ENCODE measurements at regions of chr4 and their contacts with region 1.

Region 1: DNA sequence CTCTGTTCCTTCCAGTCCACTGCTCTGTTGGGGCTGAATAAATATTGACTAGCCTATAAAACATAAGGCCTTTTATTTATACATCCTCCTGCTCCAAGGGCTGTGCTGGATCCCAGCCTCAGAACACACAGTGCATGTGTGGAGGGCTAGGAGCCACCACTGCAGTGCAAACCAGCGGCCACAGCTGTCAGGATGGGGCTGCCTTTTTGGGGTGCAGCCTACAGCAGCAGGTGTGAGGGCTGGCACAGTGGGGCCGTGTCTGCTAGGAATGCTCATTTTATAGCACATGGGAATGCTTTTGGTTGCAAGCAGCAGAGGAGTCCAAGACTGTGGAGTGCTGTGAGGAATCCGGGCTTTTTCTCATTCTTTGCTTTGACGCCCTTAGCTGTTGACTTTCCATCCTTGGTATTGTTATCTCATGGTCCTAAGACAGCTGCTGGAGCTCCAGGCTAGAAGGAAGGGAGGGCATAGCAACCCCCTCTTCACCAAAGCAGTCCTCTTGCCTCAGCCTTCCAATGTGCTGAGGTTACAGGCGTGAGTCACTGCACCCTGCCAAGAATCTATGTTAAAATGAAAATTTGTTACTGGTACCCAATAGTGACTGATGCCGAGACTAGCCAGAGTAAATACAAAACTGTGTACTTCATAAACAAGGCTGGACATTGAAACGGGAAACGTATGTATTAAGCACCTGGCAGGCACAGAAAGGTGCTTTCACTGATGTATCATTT is 334.3 kb upstream of the GATB start:
- DNase-seq: peak in 1 of 14 experiments; percentile 50
- ATAC-seq: no peak
- H3K4me3 ChIP-seq: no peak overlapping the region
- H3K4me3 Mint-ChIP-seq: no peak overlapping the region
- H3K27ac ChIP-seq: peak overlapping the region in 1 of 2 donors; percentile 61
- H3K27ac Mint-ChIP-seq: peak overlapping the region; percentile 95
- H3K4me1 ChIP-seq: peaks cover 78% of the 10 kb centered on the region
- H3K4me1 Mint-ChIP-seq: peaks cover 69% of the 10 kb centered on the region
- H3K27me3 ChIP-seq: no peaks in the 10 kb centered on the region
- H3K27me3 Mint-ChIP-seq: no peaks in the 10 kb centered on the region
- CTCF ChIP-seq: no peak

Region 2: DNA sequence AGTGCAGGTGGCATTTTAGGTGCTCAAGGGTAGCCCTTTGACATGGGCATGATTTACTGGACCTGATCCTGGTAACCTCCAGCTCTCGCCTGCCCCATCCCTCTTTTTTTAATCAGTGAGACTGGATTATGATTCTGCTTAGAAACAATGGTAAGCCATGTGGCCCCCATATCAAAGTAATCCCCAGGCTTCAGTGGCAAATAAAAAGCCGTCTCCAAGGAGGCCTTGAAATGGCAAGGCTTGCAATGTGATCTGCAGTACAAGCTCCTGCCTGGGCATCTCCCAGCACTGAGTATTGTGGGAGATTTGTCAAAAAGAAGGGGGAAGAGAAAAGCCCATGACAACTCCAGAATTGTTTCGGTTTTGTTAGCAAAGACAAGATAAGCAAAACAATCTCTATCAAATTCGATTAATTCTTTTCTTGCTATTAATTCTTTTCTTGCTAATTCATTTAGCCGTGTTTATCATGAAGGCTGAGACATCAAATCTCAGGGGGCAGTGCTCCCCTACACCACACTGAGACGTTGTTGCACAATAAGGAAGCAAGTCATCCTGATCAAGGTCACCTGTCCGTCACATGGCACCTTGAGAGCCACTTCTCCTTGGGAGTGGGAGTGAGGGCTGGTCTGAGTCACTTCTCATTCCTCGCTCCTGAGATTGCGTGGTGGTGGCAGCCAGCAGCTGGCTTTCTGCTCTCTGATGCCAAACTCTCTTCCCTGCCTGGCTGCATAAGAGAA is 21.6 kb before region 1 on chr4:
- CTCF ChIA-PET with region 1: no interaction called
- POLR2A ChIA-PET with region 1: interaction called, 52 read pairs
- intact Hi-C with region 1: loop called in 1 of 2 experiments (anchors 2 kb)
- DNase-seq: no peak
- ATAC-seq: no peak
- H3K4me3 ChIP-seq: no peak overlapping the region
- H3K4me3 Mint-ChIP-seq: no peak overlapping the region
- H3K27ac ChIP-seq: no peak overlapping the region
- H3K27ac Mint-ChIP-seq: no peak overlapping the region
- H3K4me1 ChIP-seq: peaks cover 28% of the 10 kb centered on the region
- H3K4me1 Mint-ChIP-seq: peaks cover 74% of the 10 kb centered on the region
- H3K27me3 ChIP-seq: no peaks in the 10 kb centered on the region
- H3K27me3 Mint-ChIP-seq: no peaks in the 10 kb centered on the region
- CTCF ChIP-seq: no peak